Stomach (tissue), 19 donors: ENCODE measurements at regions of chr3 and their contacts with region 1.

Region 1: DNA sequence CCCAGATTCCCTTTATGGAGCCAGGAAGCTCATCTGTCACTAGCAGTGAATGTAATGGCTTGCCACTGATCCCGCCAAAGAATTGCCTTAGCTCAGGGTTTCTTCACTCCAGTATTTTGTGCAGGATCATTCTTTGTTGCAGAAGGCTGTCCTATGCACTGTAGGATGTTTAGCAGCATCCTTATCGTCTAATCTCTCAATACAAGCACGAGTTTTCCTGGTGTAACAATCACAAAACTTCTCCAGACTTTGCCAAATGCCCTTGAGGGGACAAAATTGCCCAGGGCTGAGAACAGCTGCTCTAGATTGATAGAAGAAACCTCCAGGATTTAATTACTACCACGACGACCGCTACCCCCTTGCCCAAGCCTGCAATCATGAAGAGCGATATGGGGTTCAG is 6.8 kb upstream of the SHQ1 start:
- DNase-seq: no peak
- H3K4me3 ChIP-seq: no peak overlapping the region
- H3K27ac ChIP-seq: no peak overlapping the region
- H3K4me1 ChIP-seq: peaks cover 0 to 6% (median 0%) of the 10 kb centered on the region in 4 donors
- H3K27me3 ChIP-seq: peaks cover 0 to 8% (median 0%) of the 10 kb centered on the region in 3 donors
- CTCF ChIP-seq: no peak
- EP300 ChIP-seq: no peak
- POLR2A ChIP-seq: no peak

Region 2: DNA sequence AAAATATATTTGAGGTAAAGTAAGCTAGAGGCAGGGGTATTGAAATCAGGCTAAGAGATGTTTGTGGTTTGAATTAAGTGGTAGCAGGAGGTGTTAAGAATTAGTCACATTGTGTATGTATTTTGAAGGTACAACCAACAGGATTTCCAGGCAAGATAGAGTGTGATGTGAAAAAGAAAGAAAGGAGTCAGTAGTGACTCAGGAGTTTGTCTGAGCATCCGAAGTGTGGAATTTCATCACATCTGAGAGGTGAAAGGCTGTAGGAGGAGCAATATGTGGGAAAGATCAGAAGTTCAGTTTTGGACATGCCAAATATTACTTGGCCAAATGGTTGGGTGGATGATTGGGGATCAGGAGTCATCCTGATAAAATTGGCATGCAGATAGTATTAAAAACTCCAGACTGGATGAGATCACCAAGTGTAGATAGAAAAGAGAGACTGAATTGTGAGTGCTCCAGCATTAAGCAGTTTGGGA is 174.4 kb after region 1 on chr3:
- intact Hi-C with region 1: no loop called
- DNase-seq: no peak
- H3K4me3 ChIP-seq: no peak overlapping the region
- H3K27ac ChIP-seq: peak overlapping the region in 1 of 5 donors; percentile 14
- H3K4me1 ChIP-seq: peaks cover 29 to 84% (median 50%) of the 10 kb centered on the region in 4 donors
- H3K27me3 ChIP-seq: no peaks in the 10 kb centered on the region
- CTCF ChIP-seq: no peak
- EP300 ChIP-seq: no peak
- POLR2A ChIP-seq: no peak

Region 3: GRCh38 chr3:73086071-73086494 is 231.1 kb after region 1 on chr3:
- intact Hi-C with region 1: loop called (anchors 10 kb)
- DNase-seq: peak; percentile 48 to 78
- H3K4me3 ChIP-seq: no peak overlapping the region
- H3K27ac ChIP-seq: no peak overlapping the region
- H3K4me1 ChIP-seq: peaks cover 0 to 9% (median 4%) of the 10 kb centered on the region in 4 donors
- H3K27me3 ChIP-seq: no peaks in the 10 kb centered on the region
- CTCF ChIP-seq: peak in 5 of 7 experiments; percentile 50 to 72 (median 66)
- EP300 ChIP-seq: no peak
- POLR2A ChIP-seq: no peak

Region 4: DNA sequence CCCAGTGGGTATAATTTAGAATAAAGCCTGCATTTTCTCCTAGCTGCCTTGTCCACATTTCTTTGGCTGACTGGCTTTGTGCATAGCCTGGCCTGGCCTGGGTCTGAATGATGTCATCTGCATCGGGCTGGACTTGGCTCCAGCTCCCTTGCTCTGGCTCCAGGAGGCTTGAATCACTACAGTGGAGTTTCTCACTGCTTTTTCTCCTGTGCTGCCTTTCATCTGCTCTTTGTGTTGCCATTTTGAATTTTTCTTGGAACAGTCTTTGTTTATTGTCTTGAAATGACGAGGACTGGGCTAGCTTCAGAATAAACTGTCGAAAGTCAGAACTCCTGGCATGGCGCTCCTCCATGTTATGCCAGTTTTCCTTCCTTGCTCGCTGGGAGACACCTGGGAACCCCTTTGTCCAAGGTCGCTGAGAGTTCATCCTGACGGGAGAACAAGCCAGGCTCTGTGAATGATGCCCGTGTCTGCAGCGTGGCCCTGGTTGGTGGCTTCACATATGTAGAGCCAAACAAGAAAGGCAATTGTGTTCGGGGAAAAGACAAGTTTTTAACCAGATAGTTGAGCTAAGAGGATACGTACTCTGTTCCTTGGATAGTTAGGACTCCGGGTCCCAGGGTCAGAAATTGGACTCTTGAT is 510.9 kb after region 1 on chr3:
- intact Hi-C with region 1: no loop called
- DNase-seq: peak in 1 of 2 donors; percentile 93
- H3K4me3 ChIP-seq: no peak overlapping the region
- H3K27ac ChIP-seq: peak overlapping the region in 2 of 5 donors; percentile 47 to 83
- H3K4me1 ChIP-seq: peaks cover 0 to 10% (median 0%) of the 10 kb centered on the region in 4 donors
- H3K27me3 ChIP-seq: no peaks in the 10 kb centered on the region
- CTCF ChIP-seq: no peak
- EP300 ChIP-seq: no peak
- POLR2A ChIP-seq: no peak